Heart right ventricle (tissue), 16 donors: ENCODE measurements at regions of chr11 and their contacts with region 1.

Region 1: GRCh38 chr11:96863520-96863919 is 473.7 kb downstream of the JRKL start:
- DNase-seq: peak; percentile 78 to 86
- ATAC-seq: peak; percentile 84 to 100 (median 94)
- H3K4me3 ChIP-seq: no peak overlapping the region
- H3K27ac ChIP-seq: peak overlapping the region in 5 of 10 donors; percentile 15 to 67 (median 29)
- H3K4me1 ChIP-seq: peaks cover 0 to 5% (median 0%) of the 10 kb centered on the region in 9 donors
- H3K27me3 ChIP-seq: no peaks in the 10 kb centered on the region
- CTCF ChIP-seq: no peak

Region 2: DNA sequence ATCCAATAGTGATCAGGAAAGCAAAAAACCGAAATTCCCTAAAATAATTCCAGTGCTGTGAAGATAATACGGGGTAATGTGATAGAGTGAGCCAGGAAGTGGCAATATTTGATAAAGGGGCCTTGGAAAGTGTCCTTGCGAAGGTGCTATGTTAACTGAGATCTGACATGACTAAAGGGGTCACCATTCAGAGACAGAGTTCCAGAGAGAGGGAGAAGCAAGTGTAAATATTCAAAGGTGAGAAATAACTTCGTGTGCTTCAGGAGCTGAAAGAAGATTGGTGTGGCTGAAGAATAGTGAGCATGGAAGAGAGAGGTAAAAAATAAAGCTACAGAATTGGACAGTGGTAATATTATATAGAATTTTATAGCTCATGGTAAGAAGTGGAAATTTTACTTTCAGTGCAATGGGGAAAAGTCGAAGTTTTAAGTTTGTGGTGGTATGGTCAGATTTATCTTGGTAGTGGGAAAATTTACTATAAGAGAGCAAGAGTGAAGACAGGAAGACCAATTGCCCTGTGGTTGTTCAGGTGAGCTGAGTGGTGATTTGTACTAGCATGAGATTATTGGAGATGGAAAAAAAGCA is 309.2 kb before region 1 on chr11:
- intact Hi-C with region 1: no loop called
- DNase-seq: no peak
- ATAC-seq: no peak
- H3K4me3 ChIP-seq: no peak overlapping the region
- H3K27ac ChIP-seq: no peak overlapping the region
- H3K4me1 ChIP-seq: no peaks in the 10 kb centered on the region
- H3K27me3 ChIP-seq: no peaks in the 10 kb centered on the region
- CTCF ChIP-seq: no peak

Region 3: DNA sequence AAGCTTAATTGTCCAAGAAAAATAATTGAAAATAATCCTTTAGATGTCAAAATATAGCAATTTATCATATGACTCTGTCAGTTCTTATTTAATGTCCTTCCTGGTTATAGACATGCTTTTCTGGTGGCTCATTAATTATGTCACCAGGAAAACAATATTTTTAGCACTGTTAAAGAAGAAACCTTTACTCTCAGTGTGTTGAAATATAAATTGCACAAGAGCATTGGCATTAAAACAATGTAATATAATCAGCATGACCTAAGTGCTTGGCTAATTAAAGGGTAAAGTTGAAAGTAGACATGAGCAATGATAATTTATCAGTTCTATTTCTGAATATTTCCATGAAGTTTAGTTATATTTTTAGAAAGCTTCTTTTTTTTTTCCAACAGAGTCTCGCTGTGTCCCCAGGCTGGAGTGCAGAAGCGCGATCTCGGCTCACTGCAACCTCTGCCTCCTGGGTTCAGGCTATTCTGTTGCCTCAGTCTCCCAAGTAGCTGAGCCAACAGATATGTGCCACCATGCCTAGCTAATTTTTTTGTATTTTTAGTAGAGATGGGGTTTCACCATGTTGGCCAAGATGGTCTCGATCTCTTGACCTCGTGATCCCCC is 241.4 kb before region 1 on chr11:
- intact Hi-C with region 1: loop called in 1 of 10 experiments (anchors 5 kb)
- DNase-seq: peak in 1 of 2 donors; percentile 26
- ATAC-seq: peak; percentile 61 to 98 (median 95)
- H3K4me3 ChIP-seq: no peak overlapping the region
- H3K27ac ChIP-seq: peak overlapping the region in 8 of 10 donors; percentile 29 to 89 (median 75)
- H3K4me1 ChIP-seq: peaks cover 0 to 6% (median 0%) of the 10 kb centered on the region in 9 donors
- H3K27me3 ChIP-seq: no peaks in the 10 kb centered on the region
- CTCF ChIP-seq: no peak

Region 4: GRCh38 chr11:96758957-96759356 is 104.6 kb before region 1 on chr11:
- intact Hi-C with region 1: no loop called
- DNase-seq: no peak
- ATAC-seq: no peak
- H3K4me3 ChIP-seq: no peak overlapping the region
- H3K27ac ChIP-seq: no peak overlapping the region
- H3K4me1 ChIP-seq: no peaks in the 10 kb centered on the region
- H3K27me3 ChIP-seq: no peaks in the 10 kb centered on the region
- CTCF ChIP-seq: no peak

Region 5: DNA sequence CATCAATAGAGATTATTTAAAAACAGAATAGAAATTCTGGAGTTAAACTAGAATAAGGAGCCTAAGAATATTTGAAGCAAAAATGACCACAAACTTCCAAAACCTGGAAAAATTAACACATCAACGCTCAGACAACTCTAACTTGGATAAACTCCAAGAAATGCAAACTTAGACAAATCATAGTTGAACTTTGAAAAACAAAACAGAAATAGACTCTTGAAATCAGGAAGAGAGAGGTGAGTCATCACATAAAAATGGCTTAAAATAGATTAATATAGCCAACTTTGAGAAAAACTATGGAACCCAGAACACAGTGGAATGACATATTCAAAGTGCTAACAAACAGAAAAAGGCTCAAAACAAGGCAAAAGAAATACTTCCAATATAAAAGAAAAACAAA is 500.5 kb after region 1 on chr11:
- intact Hi-C with region 1: no loop called
- DNase-seq: no peak
- ATAC-seq: no peak
- H3K4me3 ChIP-seq: no peak overlapping the region
- H3K27ac ChIP-seq: no peak overlapping the region
- H3K4me1 ChIP-seq: no peaks in the 10 kb centered on the region
- H3K27me3 ChIP-seq: no peaks in the 10 kb centered on the region
- CTCF ChIP-seq: no peak